Left cardiac atrium (tissue), 4 donors: ENCODE measurements at regions of chr5 and their contacts with region 1.

Region 1: DNA sequence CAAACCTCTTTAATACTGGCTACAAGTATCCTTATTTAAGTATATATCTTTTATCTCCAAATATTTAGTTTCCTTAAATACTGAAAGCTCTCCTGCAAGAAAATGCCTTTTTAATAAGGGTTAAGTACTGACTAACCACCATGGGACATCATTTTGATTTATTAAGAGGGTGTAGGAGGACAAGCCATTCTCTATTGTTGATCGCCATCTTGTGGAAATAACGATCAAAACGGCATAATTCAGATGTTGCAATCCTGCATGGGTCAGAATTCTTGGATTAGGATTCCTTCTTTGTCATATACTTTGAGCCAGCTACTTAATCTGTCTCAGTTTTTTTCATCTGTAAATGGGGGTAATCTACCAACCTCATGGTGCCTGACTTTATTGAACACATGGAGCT is 28.7 kb upstream of the C5orf46 start:
- DNase-seq: no peak
- ATAC-seq: peak; percentile 70 to 84

Region 2: DNA sequence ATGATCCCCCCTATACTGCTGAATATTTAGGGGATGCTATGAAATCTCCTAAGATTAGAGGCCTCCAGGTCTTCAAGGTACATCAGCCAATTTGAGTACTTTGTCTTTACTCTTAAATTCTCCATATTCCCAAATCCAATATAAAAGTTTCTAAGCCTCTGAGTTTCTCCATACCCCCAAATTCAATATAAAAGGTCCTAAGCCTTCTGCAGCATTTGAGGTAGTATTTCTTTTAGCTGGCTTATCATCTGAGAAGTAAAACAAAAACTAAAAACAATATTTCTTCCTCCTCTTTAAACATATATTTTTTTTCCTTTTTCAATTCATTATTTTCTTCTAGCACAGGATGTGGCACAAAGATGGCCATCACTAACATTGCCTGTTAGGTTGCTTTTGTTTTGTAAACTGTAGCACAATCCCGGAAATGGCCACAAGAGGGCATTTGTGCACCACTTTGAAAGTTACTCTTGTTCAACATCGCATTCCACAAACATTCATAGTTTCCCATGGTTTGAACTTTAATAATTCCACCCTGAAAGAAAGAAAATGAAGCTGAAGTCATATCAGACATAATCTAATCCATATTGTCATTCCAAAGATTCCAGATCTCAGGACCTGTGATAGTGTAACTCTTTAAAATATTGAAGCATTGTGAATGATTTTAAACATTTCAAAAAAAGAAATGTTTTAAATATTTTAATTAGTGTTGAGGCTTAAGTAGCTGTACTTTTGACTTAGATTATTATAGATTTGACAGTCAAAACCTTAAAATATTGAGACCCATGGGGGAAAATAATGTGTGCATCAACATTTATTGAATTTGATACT is 77.5 kb before region 1 on chr5:
- intact Hi-C with region 1: loop called in 1 of 2 experiments (anchors 2 kb)
- DNase-seq: peak; percentile 58
- ATAC-seq: peak; percentile 49 to 50

Region 3: DNA sequence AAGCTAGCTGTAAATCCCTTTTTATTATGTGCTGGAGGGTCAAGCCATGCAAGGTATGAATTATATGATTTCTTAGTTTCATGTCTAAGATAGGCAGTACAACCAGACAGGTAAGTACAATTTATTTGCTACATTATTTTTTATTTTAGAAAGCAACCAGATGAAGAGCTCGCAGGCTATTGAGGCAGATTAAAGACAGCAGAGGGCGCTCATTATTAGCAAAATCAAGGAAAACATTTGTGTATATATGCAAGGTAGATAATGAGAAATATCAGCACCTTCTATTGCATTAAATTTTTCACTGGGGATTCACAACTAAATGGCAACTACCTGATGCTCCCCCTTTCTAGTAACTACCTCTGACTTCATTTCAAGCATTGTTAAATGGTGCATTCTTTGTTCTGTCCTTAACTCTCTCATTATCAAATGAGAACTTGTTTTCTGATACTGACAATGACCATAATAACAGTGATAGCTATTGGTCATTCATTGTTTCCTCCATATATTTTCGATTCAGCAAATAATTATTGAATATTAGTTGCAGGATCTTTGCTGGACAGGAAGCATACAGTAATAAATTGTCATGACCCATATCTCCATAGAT is 47.9 kb before region 1 on chr5:
- intact Hi-C with region 1: loop called (anchors 1 to 2 kb)
- DNase-seq: no peak
- ATAC-seq: no peak